Ascending aorta (tissue), 2 donors: ENCODE measurements at regions of chr15 and their contacts with region 1.

Region 1: DNA sequence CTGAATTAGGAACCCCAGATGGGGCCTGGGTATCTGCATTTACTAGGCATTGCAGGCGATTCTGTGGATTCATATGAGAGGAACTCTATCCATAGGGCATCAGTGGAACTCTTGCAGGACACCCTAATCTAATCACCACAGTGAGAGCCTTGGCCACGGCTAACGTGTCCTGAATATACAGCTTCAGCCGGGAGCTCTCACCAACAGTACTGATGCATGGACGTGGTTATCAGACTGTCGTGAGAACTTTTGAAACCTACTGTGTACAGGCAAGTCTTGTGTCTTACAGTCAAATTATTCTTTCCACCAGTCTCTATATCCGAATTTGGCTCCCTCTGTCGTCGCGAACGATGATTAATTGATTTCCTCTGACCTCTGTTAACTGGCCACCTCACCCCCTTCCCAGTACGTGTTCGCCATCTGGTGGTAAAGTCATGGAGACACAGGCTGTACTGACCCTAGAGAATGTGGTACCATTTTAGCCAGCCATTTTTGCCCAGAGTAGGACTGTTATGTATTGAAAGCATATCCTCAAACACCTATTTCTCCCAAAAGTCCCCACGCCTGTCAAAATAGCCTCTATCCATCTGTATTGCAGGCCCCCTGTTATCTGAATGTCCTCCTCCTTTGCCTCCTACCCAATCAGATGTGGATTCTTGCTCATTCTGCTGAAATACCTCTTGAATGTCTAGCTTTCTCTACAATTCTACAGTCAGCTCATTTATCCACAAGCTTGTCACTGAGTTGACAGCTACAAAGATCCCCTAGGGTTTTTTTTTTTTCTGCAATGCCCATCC is 39.7 kb downstream of the GLDN start:
- DNase-seq: peak in 1 of 2 donors; percentile 85
- H3K4me3 ChIP-seq: no peak overlapping the region
- H3K27ac ChIP-seq: no peak overlapping the region
- H3K4me1 ChIP-seq: peaks cover 0 to 9% of the 10 kb centered on the region in 2 donors
- H3K27me3 ChIP-seq: no peaks in the 10 kb centered on the region
- CTCF ChIP-seq: peak; percentile 92 to 94 (median 92)

Region 2: DNA sequence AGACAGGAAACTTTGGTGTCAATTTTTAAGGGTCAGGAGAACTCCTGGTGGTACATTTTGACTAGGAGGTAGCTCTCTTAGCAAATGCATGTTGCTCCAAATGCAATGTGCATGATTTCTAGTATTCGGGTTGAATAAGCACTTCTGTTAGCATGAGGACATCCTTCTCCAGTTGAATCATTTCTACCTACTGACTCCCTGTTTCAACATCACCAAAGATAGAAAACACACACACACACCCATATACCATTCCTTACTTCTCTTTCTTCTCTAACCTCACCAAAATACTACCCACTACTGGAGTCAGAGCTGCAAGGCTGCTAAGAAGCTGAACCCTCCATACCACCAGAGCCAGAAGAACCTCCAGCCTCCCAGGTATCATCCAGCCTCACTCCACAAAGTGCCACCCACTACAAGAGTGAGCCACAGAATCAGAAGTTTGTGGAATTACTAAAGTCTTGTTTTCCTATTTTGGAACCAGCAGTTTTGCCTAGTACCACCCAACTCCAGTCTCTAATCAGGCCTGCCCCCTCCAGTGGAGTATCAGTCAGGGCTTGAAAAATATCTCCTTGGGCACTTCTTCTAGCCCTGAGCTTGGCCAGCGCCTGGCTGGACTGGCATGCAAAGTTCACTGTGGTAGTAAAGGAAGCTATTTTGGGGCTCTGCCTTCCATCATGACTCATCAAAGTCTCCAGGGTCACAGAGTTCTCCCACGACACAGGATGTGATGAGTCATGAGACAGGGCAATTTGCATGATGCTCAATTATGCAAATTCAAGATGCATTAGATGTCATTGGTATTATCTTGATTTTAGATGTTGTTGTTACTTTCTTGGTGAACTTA is 153.0 kb before region 1 on chr15:
- intact Hi-C with region 1: loop called (anchors 1 kb)
- DNase-seq: peak; percentile 19 to 81
- H3K4me3 ChIP-seq: no peak overlapping the region
- H3K27ac ChIP-seq: peak overlapping the region; percentile 56
- H3K4me1 ChIP-seq: peaks cover 0 to 17% of the 10 kb centered on the region in 2 donors
- H3K27me3 ChIP-seq: no peaks in the 10 kb centered on the region
- CTCF ChIP-seq: no peak

Region 3: GRCh38 chr15:51260212-51260611 is 121.0 kb before region 1 on chr15:
- intact Hi-C with region 1: no loop called
- DNase-seq: no peak
- H3K4me3 ChIP-seq: no peak overlapping the region
- H3K27ac ChIP-seq: no peak overlapping the region
- H3K4me1 ChIP-seq: no peaks in the 10 kb centered on the region
- H3K27me3 ChIP-seq: no peaks in the 10 kb centered on the region
- CTCF ChIP-seq: no peak

Region 4: GRCh38 chr15:51281368-51281967 is 99.7 kb before region 1 on chr15:
- intact Hi-C with region 1: loop called (anchors 1 kb)
- DNase-seq: peak; percentile 31 to 81
- H3K4me3 ChIP-seq: no peak overlapping the region
- H3K27ac ChIP-seq: peak overlapping the region in 1 of 2 donors; percentile 9
- H3K4me1 ChIP-seq: peaks cover 0 to 4% of the 10 kb centered on the region in 2 donors
- H3K27me3 ChIP-seq: no peaks in the 10 kb centered on the region
- CTCF ChIP-seq: peak; percentile 74 to 87 (median 76)

Region 5: DNA sequence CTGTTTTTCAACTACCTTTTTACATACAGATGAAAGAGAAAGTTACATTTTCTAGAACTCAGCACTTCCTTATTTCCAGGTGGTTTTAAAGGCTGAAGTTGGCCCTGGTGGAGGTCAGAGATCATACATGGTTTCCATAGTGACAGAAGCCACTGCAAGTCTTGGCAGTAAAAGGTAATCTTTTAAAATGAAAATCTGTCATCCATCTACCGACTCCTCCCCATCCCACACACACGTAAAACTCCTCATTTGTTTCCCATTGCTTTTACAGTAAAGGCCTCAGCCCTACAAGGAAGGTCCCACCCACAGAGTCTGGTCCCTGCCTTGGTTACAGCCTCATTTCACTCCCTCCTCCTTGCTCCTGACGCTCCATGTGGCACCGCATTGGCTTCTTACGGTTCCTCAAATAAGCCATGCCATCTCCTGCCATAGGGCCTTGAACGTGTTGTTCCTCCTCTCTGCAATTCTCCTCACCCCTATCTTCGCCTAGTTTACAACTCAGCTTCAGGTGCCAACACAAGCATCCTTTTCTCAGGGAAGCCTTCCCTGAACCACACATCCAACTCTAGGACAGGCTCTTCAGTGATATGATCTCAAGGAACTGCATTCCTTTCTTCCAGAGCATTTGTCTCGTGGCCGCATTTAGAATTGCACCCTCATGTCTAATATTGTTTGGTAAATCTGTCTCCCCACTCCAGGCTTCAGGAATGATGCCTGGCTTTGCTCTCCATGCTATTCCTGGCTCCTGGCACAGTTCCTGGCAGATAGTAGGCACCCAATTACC is 45.5 kb before region 1 on chr15:
- intact Hi-C with region 1: loop called (anchors 5 kb)
- DNase-seq: no peak
- H3K4me3 ChIP-seq: no peak overlapping the region
- H3K27ac ChIP-seq: peak overlapping the region; percentile 62 to 77
- H3K4me1 ChIP-seq: peaks cover 16 to 40% of the 10 kb centered on the region in 2 donors
- H3K27me3 ChIP-seq: no peaks in the 10 kb centered on the region
- CTCF ChIP-seq: peak in 1 of 3 experiments; percentile 15

Region 6: GRCh38 chr15:51401872-51402517 is 20.8 kb after region 1 on chr15:
- intact Hi-C with region 1: loop called (anchors 2 kb)
- DNase-seq: peak in 1 of 2 donors; percentile 63
- H3K4me3 ChIP-seq: no peak overlapping the region
- H3K27ac ChIP-seq: no peak overlapping the region
- H3K4me1 ChIP-seq: no peaks in the 10 kb centered on the region
- H3K27me3 ChIP-seq: no peaks in the 10 kb centered on the region
- CTCF ChIP-seq: peak; percentile 28 to 58 (median 38)